ENCODE measurements at regions of chr12 and their contacts with region 1.

Region 1: DNA sequence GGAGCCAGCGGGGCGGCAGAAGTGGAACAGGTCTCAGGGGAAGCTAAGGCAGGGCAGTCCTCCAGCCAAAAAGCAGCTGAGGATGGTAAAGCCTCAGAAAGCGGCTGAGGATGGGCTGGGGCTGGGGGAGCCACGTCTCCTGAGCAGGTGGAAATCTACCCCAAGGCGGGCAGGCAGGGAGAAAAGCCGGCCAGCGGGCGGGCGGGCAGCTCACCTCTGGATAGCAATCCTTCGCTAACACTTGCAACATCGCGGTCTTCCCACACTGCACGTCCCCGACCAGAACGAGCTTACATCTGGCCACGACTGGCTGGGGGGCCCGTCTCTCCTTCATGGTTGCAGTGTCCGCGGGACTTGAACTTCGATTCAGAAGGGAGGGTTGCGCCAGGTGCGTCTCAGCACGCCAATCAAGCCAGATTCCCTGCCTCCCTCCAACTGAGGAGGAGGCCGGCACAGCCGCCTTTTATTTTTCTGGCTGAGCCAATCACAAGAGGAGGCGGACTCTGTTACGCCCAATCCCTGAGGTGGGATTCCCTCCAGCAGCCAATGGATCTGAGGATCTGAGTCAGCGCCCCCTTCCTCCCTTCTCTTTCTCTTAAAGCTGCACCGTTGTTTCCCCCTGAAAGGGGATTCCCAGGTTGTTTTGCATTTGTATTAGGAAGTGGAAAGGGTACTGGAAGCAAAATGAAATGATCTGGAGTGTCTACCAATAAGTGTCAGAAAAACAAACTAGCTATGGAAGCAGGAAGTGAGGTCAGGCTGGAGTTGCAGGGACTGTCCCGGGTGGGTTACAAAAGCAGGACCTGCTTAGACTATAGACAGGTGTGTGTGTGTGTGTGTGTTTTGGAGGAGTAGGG is at the start of gene RND1:
- DNase-seq: peak; percentile 93 to 98
- ATAC-seq: peak; percentile 87 to 89
- H3K4me3 ChIP-seq: peak within 1 kb of the TSS; percentile 68
- H3K27ac ChIP-seq: peak within 1 kb of the TSS; percentile 83 to 86
- H3K4me1 ChIP-seq: peaks cover 68% of the 10 kb centered on the region
- CTCF ChIP-seq: no peak
- EP300 ChIP-seq: no peak
- POLR2A ChIP-seq: peak; percentile 100
- RAD21 ChIP-seq: no peak
- polyA plus RNA-seq, gene RND1: 37.8 and 54.5 TPM in 2 replicates

Region 2: DNA sequence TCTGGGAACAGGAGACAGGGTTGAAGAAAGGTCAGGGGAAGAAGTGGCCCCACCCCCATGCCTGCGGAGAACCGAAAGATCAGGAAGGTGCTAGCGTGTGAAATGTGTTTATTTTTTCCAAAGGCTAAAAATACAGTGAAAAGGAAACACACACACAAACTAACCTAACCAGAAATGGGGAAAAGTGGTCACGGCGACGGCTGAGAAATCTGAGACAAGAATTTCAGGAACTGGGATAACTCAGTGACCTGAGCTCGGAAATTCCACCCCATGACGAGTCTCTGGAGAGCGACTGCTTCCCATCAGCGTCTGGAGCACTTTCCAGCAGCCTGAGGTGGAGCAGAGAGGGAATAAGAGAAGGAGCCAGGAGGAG is 16.6 kb after region 1 on chr12:
- CTCF ChIA-PET with region 1: interaction called, 1,365 read pairs
- POLR2A ChIA-PET with region 1: interaction called, 157 read pairs
- DNase-seq: peak in 1 of 2 experiments; percentile 74
- ATAC-seq: peak; percentile 61 to 66
- H3K4me3 ChIP-seq: peak overlapping the region; percentile 29
- H3K27ac ChIP-seq: peak overlapping the region; percentile 88 to 90
- H3K4me1 ChIP-seq: peaks cover 59% of the 10 kb centered on the region
- CTCF ChIP-seq: no peak
- EP300 ChIP-seq: 0 out of 5 replicates have a peak, but pooled peaks of 1 of the 2 experiments have one; percentile 8
- POLR2A ChIP-seq: no peak
- RAD21 ChIP-seq: no peak

Region 3: GRCh38 chr12:48924617-48925303 is 59.1 kb after region 1 on chr12:
- CTCF ChIA-PET with region 1: interaction called, 311 read pairs
- POLR2A ChIA-PET with region 1: interaction called, 9 read pairs
- DNase-seq: peak; percentile 59 to 62
- ATAC-seq: peak; percentile 84 to 86
- H3K4me3 ChIP-seq: peak overlapping the region; percentile 71
- H3K27ac ChIP-seq: peak overlapping the region; percentile 77 to 95
- H3K4me1 ChIP-seq: peaks cover 6% of the 10 kb centered on the region; the same call in 1 of the 3 replicates
- CTCF ChIP-seq: peak; percentile 31; the same call in 2 of the 3 replicates
- EP300 ChIP-seq: no peak
- POLR2A ChIP-seq: no peak
- RAD21 ChIP-seq: peak; percentile 35 to 38; a peak in 3 of 5 replicates

Region 4: GRCh38 chr12:48957141-48958048 is 91.7 kb after region 1 on chr12 and contains the start of gene ARF3:
- CTCF ChIA-PET with region 1: no interaction called
- POLR2A ChIA-PET with region 1: interaction called, 10 read pairs
- DNase-seq: peak; percentile 95 to 96
- ATAC-seq: peak; percentile 87 to 94
- H3K4me3 ChIP-seq: peak within 1 kb of the TSS; percentile 79
- H3K27ac ChIP-seq: peak within 1 kb of the TSS; percentile 95
- H3K4me1 ChIP-seq: peaks cover 10% of the 10 kb centered on the region
- CTCF ChIP-seq: no peak
- EP300 ChIP-seq: no peak
- POLR2A ChIP-seq: peak; percentile 68
- RAD21 ChIP-seq: no peak
- polyA plus RNA-seq, gene ARF3: 281 and 287 TPM in 2 replicates

Measured in A549 (cell line).